Activated B cell treated with CpG ODN at 0.5 μM for 24 hours (primary cell): ENCODE measurements at regions of chr13 and their contacts with region 1.

Region 1: DNA sequence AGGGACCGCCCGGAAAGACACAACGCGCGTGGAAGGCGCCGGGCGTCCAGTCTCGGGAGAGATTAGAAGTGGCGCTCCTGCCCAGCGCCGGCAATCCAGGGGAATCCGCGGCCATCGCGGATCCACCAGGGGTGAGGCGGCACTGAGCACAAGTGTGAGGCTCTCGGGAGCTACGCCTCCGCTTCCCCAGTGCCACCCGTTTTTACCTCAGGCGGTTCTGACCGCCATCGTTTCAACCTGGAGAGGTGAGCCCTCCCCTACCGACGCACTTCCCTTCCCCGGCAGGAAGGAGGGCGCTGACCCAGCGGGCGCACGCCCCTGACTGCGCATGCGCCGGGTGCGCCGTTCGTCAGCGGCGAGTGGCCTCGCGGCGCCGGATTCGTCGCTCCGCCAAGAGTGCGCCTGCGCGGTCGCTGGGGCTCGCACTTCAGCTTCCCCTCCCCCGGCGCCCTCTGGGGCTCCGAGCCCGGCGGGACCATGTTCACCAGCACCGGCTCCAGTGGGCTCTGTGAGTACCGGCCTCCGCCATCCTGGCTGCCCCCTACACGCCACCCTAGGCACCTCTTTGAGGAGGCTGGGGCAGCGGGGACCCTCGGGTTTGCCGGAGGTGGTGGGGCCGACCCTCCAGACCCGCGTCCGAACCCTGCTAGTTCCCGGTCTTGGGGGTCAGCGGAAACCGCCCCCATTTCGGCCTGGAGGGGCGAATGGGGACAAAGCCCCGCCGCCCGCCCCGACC is at the start of gene UBAC2:
- DNase-seq: peak; percentile 98
- ATAC-seq: peak; percentile 74
- H3K4me3 Mint-ChIP-seq: peak within 1 kb of the TSS; percentile 95
- H3K27ac Mint-ChIP-seq: peak within 1 kb of the TSS; percentile 94
- H3K4me1 Mint-ChIP-seq: peaks cover 59% of the 10 kb centered on the region
- H3K27me3 Mint-ChIP-seq: no peaks in the 10 kb centered on the region
- CTCF ChIP-seq: no peak
- total RNA-seq, gene UBAC2: 40.6 and 51.0 TPM in 2 replicates

Region 2: GRCh38 chr13:98751861-98752466 is 448.6 kb before region 1 on chr13:
- CTCF ChIA-PET with region 1: no interaction called
- POLR2A ChIA-PET with region 1: no interaction called
- intact Hi-C with region 1: no loop called
- DNase-seq: no peak
- ATAC-seq: no peak
- H3K4me3 Mint-ChIP-seq: no peak overlapping the region
- H3K27ac Mint-ChIP-seq: no peak overlapping the region
- H3K4me1 Mint-ChIP-seq: no peaks in the 10 kb centered on the region
- H3K27me3 Mint-ChIP-seq: peaks cover 45% of the 10 kb centered on the region
- CTCF ChIP-seq: no peak

Region 3: DNA sequence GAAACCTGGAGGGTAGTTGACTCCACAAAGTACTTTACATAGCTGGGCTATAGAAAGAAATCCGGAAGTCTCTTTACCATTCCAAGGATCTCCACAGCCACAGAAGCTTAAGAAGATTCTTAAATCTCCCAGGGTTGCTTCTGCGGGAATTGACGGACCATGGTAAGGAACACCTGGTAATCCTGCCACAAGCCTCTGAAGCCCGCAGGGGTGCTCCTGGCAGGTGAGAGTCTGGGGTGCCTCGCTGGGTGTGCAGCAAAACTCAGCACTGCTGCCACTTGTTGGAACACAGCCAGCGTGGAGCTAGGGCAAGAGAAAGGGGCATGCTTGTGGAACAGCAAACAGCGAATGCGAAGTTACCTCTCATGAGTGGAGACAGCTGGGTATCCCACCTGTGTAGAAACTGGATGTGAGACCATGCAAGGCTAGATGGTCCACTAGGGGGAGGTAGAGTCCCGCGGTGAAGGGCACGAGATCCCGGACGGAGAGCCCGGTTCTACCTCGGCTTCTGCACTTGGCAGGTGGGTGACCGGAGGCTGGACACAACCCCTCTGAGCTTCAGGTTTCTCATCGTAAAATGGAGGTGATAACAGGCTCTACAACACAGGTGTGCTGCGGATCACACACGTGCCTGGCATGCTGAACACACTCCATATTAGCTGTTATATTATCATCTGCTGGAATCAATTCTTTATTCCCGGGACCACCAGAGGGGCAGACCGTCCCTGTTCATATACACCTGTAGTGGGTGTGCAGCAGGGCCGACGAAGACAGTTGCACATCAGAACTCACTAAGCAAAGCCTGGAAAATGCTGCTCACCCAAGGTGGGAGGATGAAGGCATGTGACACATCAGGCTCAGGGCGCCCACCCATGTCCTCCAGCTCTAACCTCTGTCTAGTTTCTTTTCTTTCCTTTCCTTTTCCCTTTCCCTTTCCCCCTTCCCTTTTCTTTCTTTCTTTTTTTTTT is 24.0 kb before region 1 on chr13:
- CTCF ChIA-PET with region 1: interaction called, 10 read pairs
- POLR2A ChIA-PET with region 1: interaction called, 7 read pairs
- intact Hi-C with region 1: loop called (anchors 1 kb)
- DNase-seq: peak; percentile 64
- ATAC-seq: peak; percentile 90
- H3K4me3 Mint-ChIP-seq: peak overlapping the region; percentile 58
- H3K27ac Mint-ChIP-seq: peak overlapping the region; percentile 24
- H3K4me1 Mint-ChIP-seq: peaks cover 43% of the 10 kb centered on the region
- H3K27me3 Mint-ChIP-seq: peaks cover 2% of the 10 kb centered on the region
- CTCF ChIP-seq: no peak

Region 4: DNA sequence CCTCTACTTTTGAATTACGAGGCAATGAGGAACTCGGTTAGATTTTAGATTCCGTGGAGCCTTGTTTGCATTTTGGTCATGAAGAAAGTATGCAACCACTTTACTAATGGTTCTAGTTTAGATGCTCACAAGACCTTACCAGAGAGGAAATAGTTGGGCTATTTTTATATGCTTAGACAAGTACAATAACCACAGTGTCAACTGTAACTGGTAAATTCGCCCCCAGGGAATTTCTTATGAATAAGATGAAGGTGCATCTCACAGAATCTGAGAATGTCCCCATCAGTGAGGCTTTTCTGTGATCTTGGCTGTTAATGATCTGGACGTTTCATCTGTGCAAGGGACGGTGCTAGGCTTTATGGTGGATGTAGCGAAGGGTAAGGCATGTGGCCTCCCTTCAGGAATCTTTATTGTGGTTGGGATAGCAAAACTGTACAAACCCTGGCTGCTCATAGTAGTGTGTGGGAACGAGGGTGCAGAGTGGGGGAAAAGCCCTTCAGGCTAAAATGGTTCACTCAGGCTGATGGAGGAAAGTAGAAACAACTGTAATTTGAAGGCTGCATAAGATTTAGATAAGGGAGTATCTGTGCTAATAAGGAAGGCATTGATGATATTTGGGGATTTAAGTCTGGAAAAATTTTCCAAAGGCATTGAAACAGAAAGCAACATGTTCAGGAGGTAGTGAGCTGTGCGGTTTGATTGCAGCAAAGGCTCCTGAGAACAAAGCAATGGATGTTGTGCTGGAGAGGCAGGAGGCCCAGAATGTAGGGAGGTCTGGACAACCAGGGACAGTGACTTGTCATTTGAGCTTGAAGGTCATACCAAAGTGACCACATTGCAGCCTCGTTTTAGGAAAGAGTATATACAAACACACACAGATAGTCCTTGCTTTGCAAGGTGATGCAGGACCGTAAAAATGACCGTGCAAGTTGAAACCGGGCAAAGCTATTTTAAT is 28.4 kb after region 1 on chr13:
- CTCF ChIA-PET with region 1: interaction called, 3 read pairs
- POLR2A ChIA-PET with region 1: interaction called, 57 read pairs
- intact Hi-C with region 1: loop called (anchors 1 kb)
- DNase-seq: no peak
- ATAC-seq: peak; percentile 83
- H3K4me3 Mint-ChIP-seq: peak overlapping the region; percentile 76
- H3K27ac Mint-ChIP-seq: peak overlapping the region; percentile 88
- H3K4me1 Mint-ChIP-seq: peaks cover 87% of the 10 kb centered on the region
- H3K27me3 Mint-ChIP-seq: no peaks in the 10 kb centered on the region
- CTCF ChIP-seq: no peak

Region 5: GRCh38 chr13:99250982-99251825 is 50.6 kb after region 1 on chr13:
- CTCF ChIA-PET with region 1: interaction called, 10 read pairs
- POLR2A ChIA-PET with region 1: interaction called, 128 read pairs
- intact Hi-C with region 1: no loop called
- DNase-seq: no peak
- ATAC-seq: no peak
- H3K4me3 Mint-ChIP-seq: no peak overlapping the region
- H3K27ac Mint-ChIP-seq: peak overlapping the region; percentile 22
- H3K4me1 Mint-ChIP-seq: peaks cover 49% of the 10 kb centered on the region
- H3K27me3 Mint-ChIP-seq: no peaks in the 10 kb centered on the region
- CTCF ChIP-seq: no peak

Region 6: DNA sequence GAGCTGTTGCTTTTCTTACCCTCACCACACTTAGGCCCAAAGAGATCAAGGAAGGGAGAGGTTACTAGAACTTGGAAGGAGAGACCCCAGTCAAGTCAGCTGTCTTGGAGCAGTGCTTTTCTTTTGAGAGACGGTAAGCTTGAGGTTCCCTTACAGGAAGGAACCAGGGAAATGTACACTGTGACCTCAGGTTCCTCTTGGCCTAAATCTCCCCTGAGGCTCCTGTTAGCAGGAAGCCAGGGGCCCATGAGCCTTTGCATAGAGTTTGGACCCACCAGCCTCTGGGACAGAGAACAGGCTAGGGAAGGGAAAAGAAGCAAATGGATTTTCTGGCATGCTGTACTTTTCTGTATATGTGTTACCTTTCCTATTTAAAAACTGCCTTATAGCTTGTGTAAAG is 63.5 kb after region 1 on chr13:
- CTCF ChIA-PET with region 1: interaction called, 157 read pairs
- POLR2A ChIA-PET with region 1: interaction called, 77 read pairs
- intact Hi-C with region 1: loop called (anchors 1 kb)
- DNase-seq: no peak
- ATAC-seq: peak; percentile 63
- H3K4me3 Mint-ChIP-seq: peak overlapping the region; percentile 44
- H3K27ac Mint-ChIP-seq: peak overlapping the region; percentile 76
- H3K4me1 Mint-ChIP-seq: peaks cover 78% of the 10 kb centered on the region
- H3K27me3 Mint-ChIP-seq: no peaks in the 10 kb centered on the region
- CTCF ChIP-seq: no peak

Region 7: GRCh38 chr13:99419591-99420243 is 219.1 kb after region 1 on chr13:
- CTCF ChIA-PET with region 1: no interaction called
- POLR2A ChIA-PET with region 1: interaction called, 22 read pairs
- intact Hi-C with region 1: loop called (anchors 1 kb)
- DNase-seq: no peak
- ATAC-seq: no peak
- H3K4me3 Mint-ChIP-seq: peak overlapping the region; percentile 80
- H3K27ac Mint-ChIP-seq: peak overlapping the region; percentile 96
- H3K4me1 Mint-ChIP-seq: peaks cover 72% of the 10 kb centered on the region
- H3K27me3 Mint-ChIP-seq: no peaks in the 10 kb centered on the region
- CTCF ChIP-seq: no peak

Region 8: GRCh38 chr13:99542788-99543406 is 342.3 kb after region 1 on chr13:
- CTCF ChIA-PET with region 1: no interaction called
- POLR2A ChIA-PET with region 1: no interaction called
- intact Hi-C with region 1: loop called (anchors 5 kb)
- DNase-seq: peak; percentile 61
- ATAC-seq: peak; percentile 94
- H3K4me3 Mint-ChIP-seq: peak overlapping the region; percentile 53
- H3K27ac Mint-ChIP-seq: peak overlapping the region; percentile 84
- H3K4me1 Mint-ChIP-seq: peaks cover 67% of the 10 kb centered on the region
- H3K27me3 Mint-ChIP-seq: no peaks in the 10 kb centered on the region
- CTCF ChIP-seq: no peak